ENCODE measurements at regions of chr10 and their contacts with region 1.

Region 1: GRCh38 chr10:93816123-93816747 is 58.5 kb downstream of the LGI1 start:
- DNase-seq: peak; percentile 7
- H3K4me3 ChIP-seq: peak overlapping the region; percentile 4; the same call in 1 of the 2 replicates
- H3K27ac ChIP-seq: no peak overlapping the region
- H3K27me3 ChIP-seq: peaks cover 17% of the 10 kb centered on the region
- CTCF ChIP-seq: peak; percentile 78

Region 2: GRCh38 chr10:93554760-93555432 is 261.3 kb before region 1 on chr10:
- CTCF ChIA-PET with region 1: interaction called, 14 read pairs
- POLR2A ChIA-PET with region 1: no interaction called
- DNase-seq: no peak
- H3K4me3 ChIP-seq: no peak overlapping the region
- H3K27ac ChIP-seq: no peak overlapping the region
- H3K27me3 ChIP-seq: peaks cover 3% of the 10 kb centered on the region
- CTCF ChIP-seq: peak; percentile 66

Region 3: GRCh38 chr10:93702211-93703001 is 113.8 kb before region 1 on chr10 and contains the start of gene FRA10AC1:
- CTCF ChIA-PET with region 1: interaction called, 22 read pairs
- POLR2A ChIA-PET with region 1: no interaction called
- DNase-seq: peak; percentile 86
- H3K4me3 ChIP-seq: peak within 1 kb of the TSS; percentile 92
- H3K27ac ChIP-seq: peak within 1 kb of the TSS; percentile 89
- H3K27me3 ChIP-seq: peaks cover 7% of the 10 kb centered on the region
- CTCF ChIP-seq: peak; percentile 40
- polyA plus RNA-seq, gene FRA10AC1: 7.0 and 12.1 TPM in 2 replicates

Region 4: DNA sequence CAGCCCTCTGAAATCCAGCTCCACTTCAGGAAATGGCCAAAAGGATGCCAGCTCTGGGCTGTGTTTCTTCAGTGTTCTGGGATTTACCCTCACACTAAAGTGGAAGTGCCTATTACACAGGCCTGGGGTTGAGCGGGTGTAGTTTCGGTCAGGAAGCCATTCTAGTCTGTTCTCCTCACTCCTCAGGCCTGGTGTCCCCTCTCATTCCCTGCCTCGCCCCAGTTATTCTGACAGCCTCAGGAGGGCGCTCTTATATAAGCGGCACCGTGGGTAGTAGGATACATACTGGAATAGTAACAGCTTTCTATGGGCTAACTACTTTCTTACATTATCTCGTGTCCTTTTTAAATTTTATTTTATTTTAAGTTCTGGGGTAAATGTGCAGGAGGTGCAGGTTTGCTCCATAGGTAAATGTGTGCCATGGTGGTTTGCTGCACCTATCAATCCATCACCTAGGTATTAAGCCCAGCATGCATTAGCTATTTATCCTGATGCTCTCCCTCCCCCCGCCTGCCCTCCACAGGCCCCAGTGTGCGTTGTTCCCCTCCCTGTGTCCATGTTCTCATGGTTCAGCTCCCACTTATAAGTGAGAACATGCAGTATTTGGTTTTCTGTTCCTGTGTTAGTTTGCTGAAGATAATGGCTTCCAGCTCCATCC is 70.7 kb before region 1 on chr10:
- CTCF ChIA-PET with region 1: interaction called, 12 read pairs
- POLR2A ChIA-PET with region 1: no interaction called
- DNase-seq: no peak
- H3K4me3 ChIP-seq: no peak overlapping the region
- H3K27ac ChIP-seq: no peak overlapping the region
- H3K27me3 ChIP-seq: peaks cover 3% of the 10 kb centered on the region
- CTCF ChIP-seq: peak; percentile 31; the same call in 1 of the 2 replicates

Measured in AG04450 (cell line).